Panc1 (cell line): ENCODE measurements at regions of chr20 and their contacts with region 1.

Region 1: GRCh38 chr20:46512943-46513844 is at the start of gene ZNF334:
- DNase-seq: no peak
- ATAC-seq: peak; percentile 75
- H3K4me3 ChIP-seq: peak within 1 kb of the TSS; percentile 43 to 46
- H3K27ac ChIP-seq: no peak within 1 kb of the TSS
- H3K4me1 ChIP-seq: no peaks in the 10 kb centered on the region; the same call in 1 of the 2 replicates
- H3K27me3 ChIP-seq: peaks cover 15% of the 10 kb centered on the region
- CTCF ChIP-seq: no peak
- total RNA-seq, gene ZNF334: 0.28 TPM

Region 2: DNA sequence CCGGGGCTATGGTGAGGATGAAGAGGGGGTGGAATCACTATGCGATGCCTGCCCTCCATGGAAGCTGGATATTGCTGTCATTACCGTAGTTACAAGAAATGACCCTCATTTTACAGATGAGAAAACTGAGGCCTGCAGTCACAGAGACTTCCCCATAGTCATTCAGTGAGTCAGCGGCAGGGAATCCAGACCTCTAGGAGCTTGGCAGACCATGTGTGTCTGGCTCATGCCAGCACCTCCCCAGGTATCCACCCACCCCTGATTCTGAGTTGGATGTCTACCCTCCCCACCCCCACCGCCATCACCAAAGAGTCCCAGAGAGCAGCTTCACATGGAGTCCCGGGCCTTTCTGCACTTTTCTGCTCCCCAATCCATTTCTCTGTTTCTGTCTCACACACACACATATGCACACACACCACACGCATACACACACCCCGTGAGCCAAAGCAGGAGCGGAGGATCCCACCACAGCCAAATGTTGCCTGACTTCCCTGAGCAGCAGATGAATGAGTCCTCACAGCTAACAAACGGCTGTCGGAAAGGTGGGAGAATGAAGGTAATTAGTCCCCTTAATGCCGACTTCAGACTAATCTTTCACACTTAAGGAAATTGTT is 229.7 kb before region 1 on chr20:
- CTCF ChIA-PET with region 1: interaction called, 12 read pairs
- POLR2A ChIA-PET with region 1: no interaction called
- in situ Hi-C with region 1: no loop called
- intact Hi-C with region 1: no loop called
- DNase-seq: no peak
- ATAC-seq: no peak
- H3K4me3 ChIP-seq: no peak overlapping the region
- H3K27ac ChIP-seq: no peak overlapping the region
- H3K4me1 ChIP-seq: no peaks in the 10 kb centered on the region; the same call in 1 of the 2 replicates
- H3K27me3 ChIP-seq: peaks cover 11% of the 10 kb centered on the region; the same call in 1 of the 2 replicates
- CTCF ChIP-seq: no peak